Gastrocnemius medialis (tissue), 4 donors: ENCODE measurements at regions of chr2 and their contacts with region 1.

Region 1: GRCh38 chr2:202265467-202266277 is at the start of gene NOP58:
- DNase-seq: peak; percentile 91 to 92
- ATAC-seq: peak; percentile 99
- H3K4me3 ChIP-seq: peak within 1 kb of the TSS; percentile 77 to 98 (median 85)
- H3K27ac ChIP-seq: peak within 1 kb of the TSS; percentile 95 to 100 (median 98)
- H3K4me1 ChIP-seq: peaks cover 24 to 25% of the 10 kb centered on the region in 2 donors
- H3K27me3 ChIP-seq: no peaks in the 10 kb centered on the region
- CTCF ChIP-seq: peak in 1 of 5 experiments; percentile 6
- POLR2A ChIP-seq: peak; percentile 98 to 99
- total RNA-seq, gene NOP58: 22.5 to 69.9 (median 31.7) TPM

Region 2: DNA sequence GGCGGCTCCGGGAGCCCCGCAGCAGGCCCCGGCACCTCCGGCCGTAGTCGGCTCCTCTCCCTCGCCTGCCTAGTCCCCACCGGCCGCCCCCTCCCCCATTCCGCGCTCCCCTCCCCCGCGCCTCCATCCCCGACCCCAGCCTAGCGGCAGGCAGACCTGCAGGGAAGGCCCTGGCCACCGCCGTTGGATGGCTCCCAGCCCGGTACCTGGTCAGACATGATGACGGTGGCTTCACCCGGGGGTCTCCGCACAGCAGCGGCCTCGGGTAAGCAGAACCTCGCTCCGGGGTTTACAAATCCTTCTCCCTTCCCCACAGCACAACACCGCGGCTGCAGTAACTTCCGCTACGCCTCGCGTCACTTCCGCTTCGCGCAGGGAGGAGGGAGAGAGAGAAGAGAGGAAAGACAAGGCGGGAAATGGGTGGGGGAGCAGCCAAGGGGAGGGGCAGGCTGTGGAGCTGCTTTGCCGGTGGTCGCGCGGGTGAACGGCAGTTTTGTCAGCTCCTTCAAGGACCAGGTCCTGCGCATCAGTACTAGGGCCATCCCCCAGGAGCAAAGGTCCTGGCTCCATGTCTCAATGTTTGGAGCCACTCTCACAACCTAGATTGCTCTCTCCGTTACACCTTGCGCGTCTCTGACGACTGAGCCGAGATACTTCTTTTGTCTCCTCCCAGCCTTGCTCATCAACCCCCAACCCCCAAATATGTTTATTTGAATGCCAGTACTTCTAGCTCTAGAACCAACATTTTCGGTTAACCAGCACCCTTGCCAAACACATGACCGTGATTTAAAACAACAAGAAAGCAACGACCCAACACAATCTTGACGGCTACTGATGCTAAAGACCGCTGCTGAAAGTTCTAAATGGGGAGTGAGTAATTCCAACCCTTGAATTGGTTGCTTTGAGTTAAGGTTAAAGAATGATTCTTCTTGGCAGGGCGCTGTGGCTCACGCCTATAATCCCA is 27.2 kb before region 1 on chr2 and contains the start of gene SUMO1:
- in situ Hi-C with region 1: no loop called
- intact Hi-C with region 1: loop called (anchors 2 kb)
- DNase-seq: peak; percentile 77 to 86
- ATAC-seq: peak; percentile 96 to 97
- H3K4me3 ChIP-seq: peak within 1 kb of the TSS; percentile 92 to 100 (median 96)
- H3K27ac ChIP-seq: peak within 1 kb of the TSS; percentile 91 to 100 (median 99)
- H3K4me1 ChIP-seq: peaks cover 23 to 28% of the 10 kb centered on the region in 2 donors
- H3K27me3 ChIP-seq: no peaks in the 10 kb centered on the region
- CTCF ChIP-seq: no peak
- POLR2A ChIP-seq: peak; percentile 70 to 75
- total RNA-seq, gene SUMO1: 44.0 to 62.4 (median 52.7) TPM

Region 3: GRCh38 chr2:202249521-202249850 is 16.2 kb before region 1 on chr2:
- in situ Hi-C with region 1: no loop called
- intact Hi-C with region 1: loop called (anchors 2 kb)
- DNase-seq: peak; percentile 38 to 84
- ATAC-seq: peak; percentile 96 to 98
- H3K4me3 ChIP-seq: no peak overlapping the region
- H3K27ac ChIP-seq: peak overlapping the region; percentile 81 to 92 (median 86)
- H3K4me1 ChIP-seq: peaks cover 7 to 8% of the 10 kb centered on the region in 2 donors
- H3K27me3 ChIP-seq: no peaks in the 10 kb centered on the region
- CTCF ChIP-seq: no peak
- POLR2A ChIP-seq: no peak

Region 4: GRCh38 chr2:202278944-202279343 is 13.3 kb after region 1 on chr2:
- in situ Hi-C with region 1: no loop called
- intact Hi-C with region 1: loop called (anchors 1 kb)
- DNase-seq: no peak
- ATAC-seq: peak; percentile 66 to 79
- H3K4me3 ChIP-seq: no peak overlapping the region
- H3K27ac ChIP-seq: peak overlapping the region; percentile 80 to 94 (median 84)
- H3K4me1 ChIP-seq: peaks cover 20 to 47% of the 10 kb centered on the region in 2 donors
- H3K27me3 ChIP-seq: no peaks in the 10 kb centered on the region
- CTCF ChIP-seq: peak in 4 of 5 experiments; percentile 28 to 62 (median 34)
- POLR2A ChIP-seq: no peak

Region 5: DNA sequence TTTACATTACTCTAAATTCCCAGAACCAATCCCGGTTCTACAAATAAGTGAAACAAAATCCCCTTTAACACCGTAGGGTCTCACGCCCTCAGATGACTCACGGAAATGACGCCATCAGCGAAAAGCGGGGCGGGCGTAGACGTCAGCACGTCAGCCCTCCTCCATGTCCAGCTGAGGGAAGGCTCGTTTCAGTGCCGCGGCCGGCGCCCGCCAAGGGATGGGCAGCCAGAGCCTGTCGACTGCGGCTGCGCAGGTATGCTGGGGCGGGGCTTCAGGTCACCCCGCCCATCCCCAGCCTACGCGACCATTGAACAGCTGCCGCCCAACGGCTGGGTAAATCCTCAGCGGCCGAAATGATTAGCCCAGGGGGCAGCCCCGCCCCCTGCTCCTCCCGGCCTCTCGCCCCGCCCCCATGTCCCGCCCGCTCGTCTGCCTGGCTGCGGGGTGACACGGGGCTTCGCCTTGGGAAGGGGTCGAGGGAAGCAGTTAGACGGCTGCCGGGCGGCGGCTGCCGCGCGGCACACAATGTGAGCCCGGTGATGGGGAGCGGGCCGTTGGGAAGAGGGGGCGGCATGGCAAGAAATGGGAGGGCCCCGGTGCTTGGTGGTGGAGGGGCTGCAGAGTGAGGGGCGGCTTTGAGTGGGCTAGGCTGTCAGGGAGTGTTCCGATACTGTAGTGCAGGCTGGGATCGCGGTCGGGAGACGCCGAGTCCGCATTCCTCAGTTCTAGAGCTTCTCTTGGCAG is 749.0 kb after region 1 on chr2 and contains the start of gene NBEAL1:
- in situ Hi-C with region 1: no loop called
- intact Hi-C with region 1: loop called (anchors 10 kb)
- DNase-seq: peak; percentile 97 to 98
- ATAC-seq: peak; percentile 94 to 97
- H3K4me3 ChIP-seq: peak within 1 kb of the TSS; percentile 70 to 88 (median 78)
- H3K27ac ChIP-seq: peak within 1 kb of the TSS; percentile 90 to 96 (median 94)
- H3K4me1 ChIP-seq: peaks cover 36 to 42% of the 10 kb centered on the region in 2 donors
- H3K27me3 ChIP-seq: no peaks in the 10 kb centered on the region
- CTCF ChIP-seq: no peak
- POLR2A ChIP-seq: peak; percentile 76 to 86
- total RNA-seq, gene NBEAL1: 9.8 to 21.9 (median 11.3) TPM